Gastrocnemius medialis (tissue), 4 donors: ENCODE measurements at regions of chr11 and their contacts with region 1.

Region 1: GRCh38 chr11:94134651-94135512 is 6.2 kb downstream of the PANX1 start:
- DNase-seq: peak; percentile 55 to 88
- ATAC-seq: peak; percentile 90 to 93
- H3K4me3 ChIP-seq: peak overlapping the region in 2 of 4 donors; percentile 16 to 19
- H3K27ac ChIP-seq: peak overlapping the region; percentile 84 to 88 (median 87)
- H3K4me1 ChIP-seq: peaks cover 42 to 44% of the 10 kb centered on the region in 2 donors
- H3K27me3 ChIP-seq: no peaks in the 10 kb centered on the region
- CTCF ChIP-seq: no peak
- POLR2A ChIP-seq: no peak

Region 2: DNA sequence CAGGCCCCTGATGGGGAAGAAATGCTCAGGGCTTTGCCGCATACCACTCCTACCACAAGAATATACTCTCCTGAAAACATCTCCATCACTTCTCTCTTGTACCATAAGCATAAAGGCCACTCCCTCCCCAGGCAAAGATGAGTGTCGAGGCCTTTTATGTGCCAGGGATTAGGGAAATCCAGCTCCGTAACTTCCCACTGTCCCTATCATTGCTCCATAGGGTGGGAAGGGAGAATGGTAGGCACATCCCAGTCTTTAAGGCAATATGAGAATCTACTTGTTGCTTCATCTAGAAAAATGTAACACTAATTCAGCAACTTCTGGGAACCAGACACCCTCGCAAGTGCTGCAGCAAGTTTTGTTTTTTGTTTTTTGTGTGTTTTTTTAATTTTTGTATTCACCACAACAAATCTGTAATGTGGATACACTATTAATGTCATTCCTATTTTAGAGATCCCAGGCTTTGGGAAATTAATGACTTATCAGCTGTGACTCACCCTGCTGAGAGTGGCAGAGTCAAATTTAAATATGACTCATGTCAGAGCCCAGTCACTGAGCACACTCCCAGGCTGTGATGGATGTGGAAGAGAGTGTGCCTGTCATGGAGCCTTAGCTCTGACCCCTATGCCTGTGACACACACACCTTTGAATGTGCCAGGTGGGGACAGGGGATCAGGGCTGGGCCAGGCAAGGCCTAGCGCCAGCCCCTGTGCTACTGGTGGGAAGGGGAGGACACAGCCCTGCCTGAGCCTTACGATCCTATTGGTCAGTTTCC is 17.2 kb after region 1 on chr11:
- in situ Hi-C with region 1: no loop called
- intact Hi-C with region 1: loop called (anchors 2 kb)
- DNase-seq: peak; percentile 23 to 78
- ATAC-seq: peak; percentile 97 to 98
- H3K4me3 ChIP-seq: no peak overlapping the region
- H3K27ac ChIP-seq: peak overlapping the region; percentile 76 to 84 (median 80)
- H3K4me1 ChIP-seq: peaks cover 19 to 28% of the 10 kb centered on the region in 2 donors
- H3K27me3 ChIP-seq: no peaks in the 10 kb centered on the region
- CTCF ChIP-seq: no peak
- POLR2A ChIP-seq: no peak